ENCODE measurements at regions of chr17 and their contacts with region 1.

Region 1: DNA sequence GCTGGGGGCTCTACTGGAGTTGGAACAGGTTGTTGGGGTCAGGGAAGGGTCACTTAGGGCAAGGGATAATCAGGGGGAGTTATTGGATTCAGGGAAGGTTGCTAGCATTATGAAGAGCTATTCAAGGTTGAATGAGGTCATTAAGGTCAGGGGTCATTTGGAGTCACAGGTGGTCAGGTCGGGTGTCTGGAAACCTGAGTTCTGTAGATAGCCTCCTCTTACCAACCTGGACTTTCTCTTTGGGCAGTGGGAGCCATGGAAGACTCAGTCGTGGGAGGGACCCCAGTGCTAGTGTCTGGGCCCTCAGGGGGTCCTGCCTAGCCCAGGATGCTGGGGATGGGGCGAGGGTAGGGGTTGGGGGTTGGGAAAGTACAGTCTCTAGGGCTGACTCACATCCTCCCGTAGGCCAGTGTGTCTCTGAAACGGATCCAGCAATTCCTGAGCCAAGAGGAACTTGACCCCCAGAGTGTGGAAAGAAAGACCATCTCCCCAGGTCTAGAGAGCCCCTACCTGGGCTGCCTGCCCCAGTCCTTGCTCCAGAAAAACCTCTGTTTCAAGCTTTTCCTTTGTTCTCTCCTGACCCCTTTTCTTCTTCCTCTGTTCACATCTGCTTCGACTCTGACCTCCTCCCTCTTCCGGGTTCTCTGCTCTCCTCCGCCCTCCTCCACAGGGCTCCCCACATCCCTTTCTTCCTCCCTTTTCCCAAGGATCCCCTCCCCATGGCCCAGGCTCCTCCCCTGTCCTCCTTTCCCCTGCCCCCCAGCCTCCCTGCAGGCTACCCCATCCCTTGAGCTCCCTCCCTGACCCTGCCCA is 33.5 kb downstream of the ABCC3 start:
- DNase-seq: peak; percentile 71 to 73
- ATAC-seq: peak; percentile 58 to 62
- H3K4me3 ChIP-seq: 0 out of 3 replicates have a peak overlapping the region, but pooled peaks have one; percentile 0
- H3K27ac ChIP-seq: peak overlapping the region; percentile 98
- H3K4me1 ChIP-seq: peaks cover 100% of the 10 kb centered on the region
- CTCF ChIP-seq: no peak
- EP300 ChIP-seq: peak; percentile 60 to 64; a peak in 2 of 5 replicates
- POLR2A ChIP-seq: no peak
- RAD21 ChIP-seq: 0 out of 5 replicates have a peak, but pooled peaks of 1 of the 2 experiments have one; percentile 27

Region 2: DNA sequence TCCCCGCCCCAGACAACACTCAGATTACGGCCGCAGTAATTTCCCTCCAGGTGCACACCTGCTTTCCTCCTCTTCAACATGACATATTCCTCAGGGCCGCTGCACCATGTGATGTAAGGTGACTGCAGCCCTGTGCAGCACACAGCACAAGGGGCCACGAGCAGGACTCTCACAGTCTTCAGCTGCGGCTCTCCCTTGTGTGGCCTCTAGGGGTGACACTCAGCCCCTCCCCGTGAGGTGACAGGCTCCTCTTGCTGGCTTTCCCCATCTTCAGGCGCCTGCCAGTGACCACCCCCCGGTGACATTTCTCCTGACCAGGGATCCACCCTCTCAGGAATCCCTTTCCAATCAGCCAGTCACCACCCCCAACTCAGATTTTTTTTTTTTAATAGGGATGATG is 64.9 kb before region 1 on chr17:
- CTCF ChIA-PET with region 1: no interaction called
- POLR2A ChIA-PET with region 1: no interaction called
- DNase-seq: peak; percentile 37 to 68
- ATAC-seq: peak; percentile 78 to 81
- H3K4me3 ChIP-seq: no peak overlapping the region
- H3K27ac ChIP-seq: no peak overlapping the region
- H3K4me1 ChIP-seq: no peaks in the 10 kb centered on the region
- CTCF ChIP-seq: no peak
- EP300 ChIP-seq: no peak
- POLR2A ChIP-seq: no peak
- RAD21 ChIP-seq: no peak

Region 3: GRCh38 chr17:50691545-50692447 is 23.6 kb after region 1 on chr17:
- CTCF ChIA-PET with region 1: interaction called, 783 read pairs
- POLR2A ChIA-PET with region 1: interaction called, 11 read pairs
- DNase-seq: peak in 1 of 2 experiments; percentile 77
- ATAC-seq: peak in 1 of 2 experiments; percentile 2; a peak in 3 of 6 replicates
- H3K4me3 ChIP-seq: 0 out of 3 replicates have a peak overlapping the region, but pooled peaks have one; percentile 1
- H3K27ac ChIP-seq: peak overlapping the region; percentile 97 to 98
- H3K4me1 ChIP-seq: peaks cover 98% of the 10 kb centered on the region
- CTCF ChIP-seq: no peak
- EP300 ChIP-seq: no peak
- POLR2A ChIP-seq: no peak
- RAD21 ChIP-seq: no peak; a peak in 1 of 5 replicates

Region 4: DNA sequence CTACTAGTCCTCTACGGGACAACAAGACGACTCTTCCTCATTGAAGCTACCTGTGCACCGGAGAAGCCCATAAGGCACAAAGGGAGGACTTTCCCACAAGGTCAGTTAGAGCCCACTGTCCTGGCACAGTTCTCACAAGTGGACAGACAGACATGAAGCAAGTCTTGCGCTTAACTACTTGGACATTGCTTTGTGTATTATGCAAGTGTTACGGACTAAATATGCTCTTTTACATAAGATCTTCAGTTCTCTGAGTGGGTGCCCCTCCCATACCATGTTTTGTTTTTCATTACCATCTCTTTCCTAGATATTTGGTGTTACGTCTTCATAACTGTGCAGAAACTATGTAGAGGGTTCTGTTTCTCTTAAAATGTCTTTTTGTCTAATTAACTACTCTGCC is 81.0 kb after region 1 on chr17:
- CTCF ChIA-PET with region 1: no interaction called
- POLR2A ChIA-PET with region 1: no interaction called
- DNase-seq: no peak
- ATAC-seq: no peak; a peak in 1 of 6 replicates
- H3K4me3 ChIP-seq: no peak overlapping the region
- H3K27ac ChIP-seq: no peak overlapping the region
- H3K4me1 ChIP-seq: no peaks in the 10 kb centered on the region
- CTCF ChIP-seq: no peak
- EP300 ChIP-seq: no peak
- POLR2A ChIP-seq: no peak
- RAD21 ChIP-seq: no peak

Measured in A549 (cell line).